HAP-1 (cell line): ENCODE measurements at regions of chr17 and their contacts with region 1.

Region 1: GRCh38 chr17:42584880-42585279 is 7.4 kb upstream of the PSMC3IP start:
- DNase-seq: no peak
- H3K4me3 ChIP-seq: no peak overlapping the region
- H3K4me1 ChIP-seq: no peaks in the 10 kb centered on the region
- H3K27me3 ChIP-seq: no peaks in the 10 kb centered on the region

Region 2: DNA sequence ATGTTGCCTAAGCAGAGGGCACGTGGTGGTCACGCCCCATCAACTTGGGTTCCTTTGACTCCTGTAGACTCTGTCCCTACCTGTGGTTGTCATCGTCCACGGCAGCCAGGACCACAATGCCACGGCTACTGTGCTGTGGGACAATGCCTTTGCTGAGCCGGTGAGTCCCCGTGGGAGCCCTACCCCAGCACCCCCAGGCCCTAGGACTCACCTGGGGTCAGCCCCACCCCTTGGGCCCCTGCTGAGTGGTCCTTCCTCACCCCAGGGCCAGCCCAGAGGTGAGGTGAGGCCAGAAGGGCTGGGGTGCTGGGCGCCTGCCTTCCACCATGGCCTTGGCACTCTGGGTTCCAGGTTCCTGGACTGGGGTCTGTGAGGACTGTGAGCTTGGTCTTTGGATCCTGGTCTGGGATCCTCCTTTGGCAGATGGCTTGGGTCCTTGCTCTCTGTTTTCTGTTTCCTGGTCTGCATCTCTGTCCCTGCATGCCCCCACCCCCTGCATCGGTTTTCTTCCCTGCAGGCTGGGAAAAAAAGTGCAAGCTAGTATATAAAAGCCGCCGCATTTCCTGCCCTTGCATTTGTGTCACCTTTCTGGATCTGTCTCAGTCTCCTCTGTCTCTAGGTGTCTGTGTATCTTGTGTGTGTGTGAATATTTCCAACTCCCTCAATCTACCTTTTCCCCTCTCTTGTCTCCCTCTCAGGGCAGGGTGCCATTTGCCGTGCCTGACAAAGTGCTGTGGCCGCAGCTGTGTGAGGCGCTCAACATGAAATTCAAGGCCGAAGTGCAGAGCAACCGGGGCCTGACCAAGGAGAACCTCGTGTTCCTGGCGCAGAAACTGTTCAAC is 279.1 kb before region 1 on chr17:
- in situ Hi-C with region 1: no loop called
- DNase-seq: no peak
- H3K4me3 ChIP-seq: no peak overlapping the region
- H3K4me1 ChIP-seq: no peaks in the 10 kb centered on the region
- H3K27me3 ChIP-seq: no peaks in the 10 kb centered on the region

Region 3: DNA sequence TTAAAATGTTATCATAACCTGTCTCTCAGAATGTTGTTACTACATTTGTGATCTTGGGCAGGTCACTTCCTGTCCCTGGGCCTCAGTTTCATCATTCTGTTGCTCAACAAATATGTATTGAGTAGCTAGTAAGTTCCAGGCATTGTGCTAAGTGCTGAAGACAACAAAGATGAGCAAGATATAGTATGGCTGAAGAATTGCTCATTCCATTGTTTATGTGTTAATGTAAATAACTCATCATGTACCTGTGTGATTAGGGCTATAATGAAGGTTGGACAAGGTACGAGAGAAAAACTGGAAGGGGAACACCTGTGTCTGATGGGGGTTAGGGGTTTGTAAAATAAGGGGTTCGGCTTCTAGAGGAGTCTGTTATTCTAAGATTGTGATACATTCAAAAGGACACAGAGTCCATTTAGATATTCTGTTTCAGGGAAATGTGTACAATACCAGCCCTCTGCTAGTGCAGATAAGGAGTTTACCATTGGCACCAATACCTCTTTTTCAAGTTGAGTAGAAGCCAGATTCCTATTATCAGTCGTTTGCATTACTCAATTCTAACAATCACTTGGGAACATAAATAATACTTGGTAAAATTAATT is 44.6 kb after region 1 on chr17:
- in situ Hi-C with region 1: loop called (anchors 5 kb)
- DNase-seq: no peak
- H3K4me3 ChIP-seq: no peak overlapping the region
- H3K4me1 ChIP-seq: no peaks in the 10 kb centered on the region
- H3K27me3 ChIP-seq: no peaks in the 10 kb centered on the region

Region 4: DNA sequence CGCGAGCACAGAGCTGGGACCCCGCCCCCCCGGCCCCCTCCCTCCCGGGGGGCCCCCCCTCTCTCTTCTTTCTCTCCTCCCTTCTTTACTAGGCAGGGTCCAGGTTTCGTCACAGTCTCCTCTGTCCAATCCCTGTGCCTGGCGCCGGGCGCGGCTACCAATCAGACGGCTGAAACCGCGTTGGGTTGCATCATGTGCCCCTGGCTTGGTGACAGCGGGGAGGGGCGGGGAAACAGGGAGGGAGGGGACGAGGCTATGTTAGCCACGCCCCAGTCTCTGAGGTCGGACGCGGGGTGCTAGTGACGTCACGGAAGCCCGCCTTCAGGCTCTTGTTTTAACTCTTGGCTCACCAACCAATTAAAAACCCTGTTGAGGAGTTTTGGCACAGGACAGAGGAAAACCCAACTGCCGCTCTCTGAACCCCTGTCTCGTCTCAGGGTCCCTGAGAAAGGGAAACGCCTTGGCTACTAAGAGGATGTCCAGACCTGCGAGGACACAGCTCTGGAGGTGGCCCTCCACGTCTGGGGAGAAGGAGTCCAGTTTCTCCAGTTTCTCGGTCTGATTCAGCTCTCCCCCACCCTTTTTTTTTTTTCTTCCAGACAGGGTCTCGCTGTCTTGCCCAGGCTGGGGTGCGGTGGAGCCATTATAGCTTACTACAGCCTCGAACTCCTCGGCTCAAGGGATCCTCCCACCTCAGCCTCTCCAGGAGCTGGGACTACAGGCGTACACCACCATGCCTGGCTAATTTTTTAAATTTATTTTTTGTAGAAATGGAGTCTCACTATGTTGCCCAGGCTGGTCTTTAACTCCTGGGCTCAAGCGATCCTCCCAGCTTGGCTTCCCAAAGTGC is 92.4 kb after region 1 on chr17:
- in situ Hi-C with region 1: loop called (anchors 5 kb)
- DNase-seq: peak; percentile 100
- H3K4me3 ChIP-seq: peak overlapping the region; percentile 80
- H3K4me1 ChIP-seq: peaks cover 49% of the 10 kb centered on the region
- H3K27me3 ChIP-seq: no peaks in the 10 kb centered on the region